ENCODE measurements at regions of chr1 and their contacts with region 1.

Region 1: DNA sequence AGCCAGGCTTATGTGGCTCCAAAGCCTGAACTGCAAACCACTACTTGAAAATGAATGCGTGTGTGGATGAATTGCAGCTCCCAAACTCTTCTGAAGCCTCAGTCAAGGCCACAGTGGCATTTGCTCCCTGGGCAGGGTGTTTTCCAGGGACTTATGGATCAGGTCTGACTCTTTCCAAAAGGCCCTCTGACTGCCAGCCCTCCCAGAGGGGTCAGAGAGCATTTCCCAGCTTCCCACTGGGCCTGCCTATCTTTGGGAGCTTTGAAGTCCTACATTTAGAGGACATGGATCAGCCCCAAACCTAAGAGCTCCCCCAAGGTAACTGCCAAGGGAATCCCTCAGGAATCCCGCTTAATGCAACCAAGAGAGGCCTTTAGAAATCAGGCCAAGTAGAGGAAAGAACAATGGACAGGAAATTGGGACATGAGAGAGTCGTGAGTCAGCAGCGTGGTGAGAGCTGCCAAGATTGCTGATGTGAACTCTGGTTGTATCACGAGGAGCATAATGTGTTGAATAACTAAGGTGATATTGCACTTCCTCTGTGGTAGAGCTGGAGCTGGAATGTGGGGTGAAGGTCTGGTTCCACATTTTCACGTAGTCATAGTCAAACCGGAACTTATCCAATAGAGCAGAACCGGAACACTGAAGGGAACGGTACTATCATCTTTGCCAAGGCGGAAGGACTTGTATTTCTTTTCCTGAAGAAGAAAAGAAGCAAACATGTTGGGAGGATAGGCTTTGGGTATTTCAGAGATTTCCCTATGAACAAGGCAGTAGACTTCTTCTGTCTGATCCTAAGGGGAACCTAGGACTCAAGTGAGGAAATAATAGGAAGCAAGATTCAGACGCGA is 99.4 kb upstream of the JUN start:
- DNase-seq: peak; percentile 74
- H3K4me3 Mint-ChIP-seq: peak overlapping the region; percentile 37
- H3K27ac Mint-ChIP-seq: peak overlapping the region; percentile 94
- H3K4me1 Mint-ChIP-seq: peaks cover 72% of the 10 kb centered on the region
- H3K27me3 Mint-ChIP-seq: no peaks in the 10 kb centered on the region
- CTCF ChIP-seq: no peak

Region 2: DNA sequence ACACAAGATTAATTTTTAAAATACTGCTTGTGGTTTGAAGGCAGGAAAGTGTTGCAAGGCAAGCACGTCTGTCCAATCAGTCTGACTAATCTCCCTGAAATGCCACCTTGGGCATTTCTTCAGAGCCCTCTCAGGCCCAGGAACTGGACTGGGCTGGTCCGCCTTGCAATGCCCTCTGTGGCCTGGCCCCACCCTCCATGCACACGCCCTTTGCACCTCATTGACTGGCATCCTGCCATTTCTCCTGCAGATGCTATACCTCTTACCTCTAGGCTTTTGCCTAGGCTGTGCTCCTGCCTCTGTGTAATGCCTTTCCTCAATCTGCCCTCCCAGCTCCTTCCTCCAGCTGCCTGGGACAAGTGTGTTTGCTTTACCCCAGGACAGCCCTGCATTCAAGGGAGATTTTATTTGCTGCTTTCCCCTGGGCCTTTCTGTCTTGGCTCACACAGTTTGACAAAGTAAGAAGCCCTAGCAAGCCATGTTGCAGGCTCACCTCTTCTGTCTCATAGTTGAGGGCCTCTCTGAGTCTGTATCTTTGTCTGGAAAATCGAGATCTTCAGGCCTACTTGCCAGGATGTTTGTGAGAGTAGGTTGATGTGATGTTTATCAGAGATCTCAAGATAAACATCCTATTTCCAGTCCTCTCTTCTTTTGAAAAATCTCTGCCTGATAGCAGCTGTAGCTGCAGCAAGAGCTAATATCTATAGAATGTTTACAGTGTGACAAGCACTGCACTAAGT is 49.8 kb after region 1 on chr1:
- CTCF ChIA-PET with region 1: no interaction called
- intact Hi-C with region 1: loop called (anchors 2 kb)
- DNase-seq: peak; percentile 96
- H3K4me3 Mint-ChIP-seq: no peak overlapping the region
- H3K27ac Mint-ChIP-seq: peak overlapping the region; percentile 83
- H3K4me1 Mint-ChIP-seq: peaks cover 73% of the 10 kb centered on the region
- H3K27me3 Mint-ChIP-seq: no peaks in the 10 kb centered on the region
- CTCF ChIP-seq: no peak

Region 3: GRCh38 chr1:58982259-58982998 is 99.2 kb after region 1 on chr1:
- CTCF ChIA-PET with region 1: no interaction called
- intact Hi-C with region 1: no loop called
- DNase-seq: no peak
- H3K4me3 Mint-ChIP-seq: no peak overlapping the region
- H3K27ac Mint-ChIP-seq: no peak overlapping the region
- H3K4me1 Mint-ChIP-seq: no peaks in the 10 kb centered on the region
- H3K27me3 Mint-ChIP-seq: no peaks in the 10 kb centered on the region
- CTCF ChIP-seq: no peak